Activated naive CD4-positive, alpha-beta T cell treated with anti-CD3 and anti-CD28 coated beads for 36 hours (primary cell): ENCODE measurements at regions of chr17 and their contacts with region 1.

Region 1: DNA sequence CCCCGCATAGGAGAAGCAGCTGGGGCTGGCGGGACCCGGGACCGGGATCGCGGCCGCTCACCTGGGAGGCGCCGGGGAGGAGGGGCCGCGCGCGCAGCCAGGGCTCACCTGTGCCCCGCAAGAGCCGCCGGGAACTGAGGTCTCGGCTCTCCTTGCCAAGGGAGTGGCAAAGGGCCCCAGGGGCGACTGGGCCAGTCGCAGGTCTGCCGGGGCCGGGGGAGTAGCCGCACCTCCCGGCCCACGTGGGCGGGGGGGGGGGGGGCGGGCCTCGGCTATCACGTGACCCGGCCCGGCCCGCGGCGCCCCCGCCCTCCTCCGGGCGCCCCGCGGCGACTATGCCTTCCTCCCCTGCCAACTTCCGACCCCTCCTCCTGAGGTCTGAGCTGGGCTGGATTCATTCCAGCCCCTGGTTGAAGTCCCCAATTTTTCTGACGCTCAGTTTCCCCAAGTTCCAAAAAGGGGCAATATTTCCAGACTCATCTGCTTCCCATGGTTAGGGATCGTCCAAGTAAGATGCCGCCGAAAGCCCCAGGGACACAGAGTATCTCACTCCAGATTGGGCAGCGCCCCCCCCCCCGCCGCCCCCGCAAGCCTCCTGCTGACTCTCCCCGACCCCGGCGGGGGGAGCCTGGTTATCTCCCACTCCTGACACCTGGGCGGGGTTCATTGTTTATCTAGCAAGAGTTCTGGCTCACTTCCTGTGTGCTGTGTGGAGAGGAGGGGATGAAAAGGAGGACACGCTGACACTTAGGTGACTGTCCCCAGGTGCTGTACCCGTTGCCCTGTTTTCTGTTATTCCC is at the start of gene TMC6:
- DNase-seq: peak; percentile 85
- H3K4me3 Mint-ChIP-seq: peak within 1 kb of the TSS; percentile 96
- H3K27ac Mint-ChIP-seq: peak within 1 kb of the TSS; percentile 98
- H3K4me1 Mint-ChIP-seq: peaks cover 50% of the 10 kb centered on the region
- H3K27me3 Mint-ChIP-seq: no peaks in the 10 kb centered on the region
- total RNA-seq, gene TMC6: 79.0 to 85.6 TPM

Region 2: DNA sequence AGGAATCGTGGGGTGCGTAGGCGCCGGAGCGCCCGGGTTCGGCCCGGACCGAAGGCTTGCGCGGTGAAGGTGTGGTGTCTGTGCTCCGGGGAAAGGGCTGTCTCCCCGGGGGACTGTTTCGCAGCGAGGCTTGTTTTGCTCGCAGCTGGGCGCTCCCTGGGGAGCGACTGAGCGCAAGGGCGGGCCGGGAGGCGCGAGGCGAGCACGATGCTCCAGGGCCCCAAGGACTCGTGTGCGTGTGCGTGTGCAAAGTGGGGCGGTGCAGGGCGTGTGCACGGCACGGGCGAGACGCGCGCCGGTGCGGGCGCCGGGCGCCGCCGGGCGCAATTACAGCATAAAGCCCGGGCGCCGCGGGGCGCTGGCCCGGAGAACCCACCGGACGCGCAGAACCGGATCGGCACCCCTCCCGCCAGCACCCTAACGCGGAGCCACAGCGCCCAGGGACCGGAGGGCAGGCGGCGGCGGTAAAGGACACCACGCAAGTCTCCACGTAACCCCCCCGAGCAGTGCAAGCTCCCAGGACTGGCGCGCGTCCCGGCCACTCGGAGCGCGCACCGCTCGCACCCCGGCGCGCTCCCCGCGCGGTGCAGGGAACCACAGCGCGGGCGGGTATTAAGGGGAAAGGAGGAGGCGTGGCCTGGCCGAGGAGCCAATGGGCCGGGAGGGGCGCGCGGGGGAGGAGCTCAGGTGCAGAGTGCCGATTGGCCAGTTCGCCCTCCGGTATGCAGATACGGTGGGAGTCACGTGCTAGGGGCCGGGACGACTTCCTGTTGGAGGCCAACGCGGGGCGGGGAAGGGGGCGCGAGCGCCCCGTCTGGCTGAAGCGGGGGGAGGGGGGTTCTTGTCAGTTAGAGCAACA is 170.7 kb before region 1 on chr17 and contains the start of gene TNRC6C:
- CTCF ChIA-PET with region 1: no interaction called
- intact Hi-C with region 1: loop called (anchors 5 kb)
- DNase-seq: peak; percentile 100
- H3K4me3 Mint-ChIP-seq: peak within 1 kb of the TSS; percentile 89
- H3K27ac Mint-ChIP-seq: peak within 1 kb of the TSS; percentile 84
- H3K4me1 Mint-ChIP-seq: peaks cover 32% of the 10 kb centered on the region
- H3K27me3 Mint-ChIP-seq: peaks cover 4% of the 10 kb centered on the region
- total RNA-seq, gene TNRC6C: 11.4 to 12.8 TPM

Region 3: DNA sequence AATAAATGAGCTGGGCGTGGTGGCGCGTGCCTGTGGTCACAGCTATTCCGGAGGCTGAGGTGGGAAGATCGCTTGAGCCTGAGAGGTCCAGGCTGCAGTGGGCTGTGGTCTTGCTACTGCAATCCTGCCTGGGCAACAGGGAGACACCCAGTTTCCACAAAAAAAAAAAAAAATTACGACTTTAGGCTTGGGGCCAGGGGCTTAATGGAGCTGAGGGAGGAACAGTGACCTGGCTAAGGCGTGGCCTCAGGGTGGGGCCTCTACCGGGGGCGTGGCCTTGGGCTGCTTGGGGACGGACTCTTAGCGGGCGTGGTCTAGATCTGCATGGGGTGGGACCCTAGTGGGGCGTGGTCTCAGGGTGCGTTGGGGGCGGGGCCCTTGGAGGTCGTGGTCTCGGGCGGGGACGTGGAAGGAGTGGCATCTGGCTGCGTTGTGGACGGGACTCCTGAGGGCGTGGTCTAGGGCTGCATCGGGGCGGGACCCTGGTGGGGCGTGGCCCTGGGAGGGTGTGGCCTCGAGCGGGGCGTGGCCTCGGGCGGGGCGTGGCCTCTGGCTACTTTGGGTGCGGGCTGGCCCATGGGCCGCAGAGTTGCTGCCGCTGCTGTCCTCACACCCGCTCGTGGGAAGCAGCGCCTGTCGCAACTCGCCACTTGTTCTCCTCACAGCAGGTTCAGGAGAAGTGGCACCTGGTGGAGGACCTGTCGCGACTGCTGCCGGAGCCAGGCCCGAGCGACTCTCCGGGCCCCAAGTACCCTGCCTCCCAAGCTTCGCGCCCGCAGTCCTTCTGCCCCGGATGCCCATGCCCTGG is 11.6 kb after region 1 on chr17:
- CTCF ChIA-PET with region 1: interaction called, 45 read pairs
- intact Hi-C with region 1: no loop called
- DNase-seq: peak; percentile 96
- H3K4me3 Mint-ChIP-seq: peak overlapping the region; percentile 40
- H3K27ac Mint-ChIP-seq: peak overlapping the region; percentile 28
- H3K4me1 Mint-ChIP-seq: peaks cover 64% of the 10 kb centered on the region
- H3K27me3 Mint-ChIP-seq: no peaks in the 10 kb centered on the region

Region 4: DNA sequence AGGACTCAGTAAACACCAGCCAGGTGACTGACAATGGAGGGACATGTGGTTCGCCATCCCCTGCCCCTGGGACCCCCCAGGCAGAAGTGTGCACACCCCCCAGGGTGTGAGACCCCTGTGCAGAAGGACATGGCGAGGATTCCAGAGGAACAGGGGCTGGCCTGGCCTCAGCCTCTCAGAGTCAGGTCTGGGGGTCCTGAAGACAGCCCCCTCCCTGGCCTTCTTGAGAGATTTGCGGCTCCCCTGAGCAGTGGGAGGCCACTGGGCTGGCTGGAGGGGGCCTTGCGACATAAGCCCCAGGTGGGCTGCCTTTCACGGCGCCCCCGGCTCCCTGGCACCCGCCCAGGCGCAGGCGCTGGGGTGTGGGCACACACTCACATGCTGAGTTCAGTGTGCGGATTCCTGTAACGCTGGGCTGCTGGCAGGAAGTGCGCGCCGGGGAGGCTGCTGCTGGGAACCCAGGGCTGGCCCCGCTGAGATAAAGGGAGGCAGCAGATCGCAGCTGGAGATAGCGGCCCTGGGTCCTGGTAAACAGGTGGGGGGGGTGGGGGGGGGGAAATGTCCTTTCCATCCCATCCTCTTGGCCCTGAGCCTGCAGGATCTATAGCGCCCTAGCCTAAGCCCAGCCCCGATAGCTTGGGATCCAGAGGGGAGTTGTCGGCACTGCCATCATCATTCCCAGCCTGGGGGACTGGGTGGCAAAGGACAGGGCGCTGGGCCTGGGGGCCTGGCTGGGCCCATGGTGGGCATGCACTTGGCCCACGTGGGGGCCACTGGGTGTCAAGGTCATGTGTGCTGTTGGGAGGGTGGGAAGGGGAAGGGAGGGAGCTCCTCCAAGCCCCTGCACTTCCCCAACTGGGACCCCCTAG is 129.8 kb after region 1 on chr17:
- CTCF ChIA-PET with region 1: interaction called, 3 read pairs
- intact Hi-C with region 1: loop called (anchors 2 kb)
- DNase-seq: peak; percentile 95
- H3K4me3 Mint-ChIP-seq: peak overlapping the region; percentile 81
- H3K27ac Mint-ChIP-seq: peak overlapping the region; percentile 88
- H3K4me1 Mint-ChIP-seq: peaks cover 59% of the 10 kb centered on the region
- H3K27me3 Mint-ChIP-seq: no peaks in the 10 kb centered on the region